GM10248 (cell line): ENCODE measurements at regions of chr10 and their contacts with region 1.

Region 1: DNA sequence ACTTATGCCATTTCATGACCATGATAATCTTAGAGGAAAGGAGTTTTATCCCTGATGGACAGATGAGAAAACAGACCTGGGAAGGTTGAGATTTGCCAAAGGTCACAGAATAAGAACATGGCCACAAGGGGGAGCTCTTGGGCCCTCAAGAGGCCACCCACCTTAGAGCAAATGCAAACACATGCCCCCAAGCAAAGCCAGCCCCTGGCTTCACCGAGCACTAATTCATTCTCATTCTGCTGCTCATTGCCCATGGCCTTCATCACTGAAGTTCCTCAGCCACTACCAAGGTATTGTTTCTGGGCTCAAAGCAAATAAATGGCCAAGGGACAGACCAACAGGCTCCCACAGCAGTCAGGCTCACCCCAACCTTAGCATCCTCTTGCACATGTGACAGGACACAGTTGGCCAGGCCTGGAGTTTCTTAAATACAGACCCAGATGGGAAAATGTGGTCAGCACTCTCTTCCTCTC is 44.2 kb downstream of the PDLIM1 start:
- DNase-seq: peak; percentile 66
- CTCF ChIP-seq: peak; percentile 75

Region 2: GRCh38 chr10:95133016-95133752 is 113.4 kb before region 1 on chr10:
- CTCF ChIA-PET with region 1: interaction called, 11 read pairs
- POLR2A ChIA-PET with region 1: no interaction called
- DNase-seq: peak; percentile 52
- CTCF ChIP-seq: peak; percentile 75

Region 3: DNA sequence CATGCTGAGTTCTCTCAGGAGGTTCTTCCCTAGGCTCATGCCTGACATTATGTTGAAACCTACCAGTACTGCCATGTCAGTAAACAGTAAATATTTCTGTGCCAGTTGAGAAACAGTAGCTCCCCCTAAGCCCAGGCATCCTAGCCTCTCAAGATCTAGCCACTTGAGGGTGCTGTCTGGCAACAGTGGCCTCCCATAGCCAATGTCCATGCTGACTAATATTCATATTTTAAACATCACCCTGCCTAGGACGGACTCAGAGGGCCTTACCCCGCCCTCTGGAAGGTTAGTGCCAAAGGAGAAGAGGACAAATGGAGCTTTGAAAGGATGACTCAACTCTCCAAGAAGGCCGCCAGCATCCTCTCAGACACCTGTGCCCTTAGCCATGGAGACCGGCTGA is 44.9 kb before region 1 on chr10:
- CTCF ChIA-PET with region 1: interaction called, 10 read pairs
- POLR2A ChIA-PET with region 1: no interaction called
- DNase-seq: no peak
- CTCF ChIP-seq: no peak

Region 4: DNA sequence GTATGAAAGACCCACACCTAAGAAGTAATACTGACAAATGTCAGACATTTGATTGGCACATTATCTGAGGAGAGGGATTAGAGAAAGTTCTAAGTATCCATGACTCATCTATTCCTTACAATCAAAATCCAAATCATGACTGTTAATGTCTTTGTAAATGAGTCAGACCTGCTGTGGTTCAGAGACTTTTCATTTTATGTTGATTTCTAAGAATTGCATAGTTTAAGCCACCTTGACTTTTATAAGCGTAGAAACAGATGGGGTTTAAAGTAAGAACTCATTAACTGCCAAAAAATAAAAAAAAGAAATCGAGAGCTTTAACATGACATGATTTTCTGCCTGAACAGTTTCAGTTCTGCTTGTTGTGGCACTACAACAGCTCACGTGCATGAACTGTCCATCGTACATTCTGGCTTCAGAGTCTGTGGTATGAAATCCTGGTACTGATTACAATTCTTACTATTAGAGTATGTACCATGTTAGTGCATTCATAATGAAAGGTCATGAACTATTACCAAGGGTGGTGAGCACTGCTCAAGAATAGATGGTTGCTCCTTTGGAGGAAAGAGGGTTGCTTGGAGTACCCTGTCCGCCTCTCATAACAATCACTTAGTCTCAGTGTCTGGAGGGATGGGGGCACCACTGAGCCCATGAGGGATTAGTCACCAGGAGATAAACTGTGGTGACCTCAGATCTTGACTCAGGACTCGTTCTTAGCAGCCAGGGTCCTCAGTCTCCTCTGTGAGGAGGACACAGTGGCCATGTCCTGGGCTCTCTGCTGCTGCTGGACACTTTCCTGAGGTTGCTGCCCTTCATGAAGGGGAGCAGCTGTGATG is 10.3 kb before region 1 on chr10:
- CTCF ChIA-PET with region 1: interaction called, 61 read pairs
- POLR2A ChIA-PET with region 1: no interaction called
- DNase-seq: peak; percentile 51
- CTCF ChIP-seq: no peak

Region 5: DNA sequence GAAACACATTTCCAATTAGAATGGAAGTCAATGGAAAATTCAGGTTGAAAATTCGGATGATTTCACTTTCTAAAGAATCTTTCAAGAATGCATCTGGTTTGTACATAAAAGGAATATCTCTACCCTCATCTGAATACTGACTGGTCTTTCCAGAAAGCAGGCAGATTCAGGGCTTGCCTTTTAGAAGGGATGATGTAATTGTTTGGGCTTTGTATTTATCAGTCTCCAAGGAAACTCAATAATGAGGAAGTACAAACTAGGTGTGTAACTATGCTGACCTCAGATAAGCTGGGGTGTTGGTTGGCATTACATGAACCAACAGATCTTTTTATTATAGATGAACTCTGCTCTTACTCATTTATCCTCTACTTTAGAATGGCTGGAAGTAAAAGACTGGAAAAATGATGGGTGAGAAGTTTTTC is 20.1 kb after region 1 on chr10:
- CTCF ChIA-PET with region 1: interaction called, 57 read pairs
- POLR2A ChIA-PET with region 1: interaction called, 3 read pairs
- DNase-seq: peak; percentile 78
- CTCF ChIP-seq: no peak

Region 6: DNA sequence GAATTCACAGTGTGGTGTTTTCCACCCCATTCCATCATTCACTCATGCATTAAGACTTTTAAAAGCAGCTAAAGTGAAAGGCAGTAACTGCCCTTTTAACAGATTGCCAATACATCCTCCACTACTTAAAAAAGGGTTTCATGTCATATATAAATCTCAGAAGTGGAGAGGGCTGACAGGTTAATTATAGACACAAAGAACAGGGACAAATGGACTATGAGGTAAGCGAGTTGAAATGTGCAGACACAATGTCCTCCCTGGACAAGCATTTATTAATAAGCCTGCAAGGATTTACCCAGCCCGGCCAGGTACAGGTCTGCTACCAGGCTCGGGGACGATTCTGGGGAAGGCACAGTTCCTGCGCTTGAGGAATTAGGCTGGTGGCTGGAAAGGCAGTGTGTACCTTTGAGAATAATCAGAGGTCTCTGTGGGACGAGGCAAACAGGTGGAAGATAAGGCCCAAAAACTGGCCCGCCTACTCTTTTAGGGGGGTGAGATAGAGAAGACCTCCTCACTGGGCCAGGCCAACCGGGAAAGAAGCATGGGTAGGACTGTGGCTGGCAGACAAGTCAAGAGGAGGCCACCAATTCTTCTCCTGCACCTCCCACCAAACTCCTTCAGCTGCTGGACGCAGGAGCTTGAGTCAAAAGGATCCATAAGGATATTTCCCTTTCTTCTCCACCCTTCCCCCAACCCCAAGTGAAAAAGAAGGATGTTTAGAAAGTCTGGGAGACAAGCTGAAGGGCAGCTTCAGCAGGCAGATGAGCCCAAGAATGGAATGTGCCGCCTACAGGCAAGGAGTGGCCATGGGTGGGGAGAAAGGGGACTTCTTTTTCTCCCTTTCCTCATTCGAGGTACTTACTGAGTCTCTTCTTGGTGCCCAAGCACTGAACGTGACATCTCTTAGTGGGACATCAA is 42.6 kb after region 1 on chr10:
- CTCF ChIA-PET with region 1: interaction called, 45 read pairs
- POLR2A ChIA-PET with region 1: no interaction called
- DNase-seq: peak; percentile 34
- CTCF ChIP-seq: peak; percentile 35

Region 7: DNA sequence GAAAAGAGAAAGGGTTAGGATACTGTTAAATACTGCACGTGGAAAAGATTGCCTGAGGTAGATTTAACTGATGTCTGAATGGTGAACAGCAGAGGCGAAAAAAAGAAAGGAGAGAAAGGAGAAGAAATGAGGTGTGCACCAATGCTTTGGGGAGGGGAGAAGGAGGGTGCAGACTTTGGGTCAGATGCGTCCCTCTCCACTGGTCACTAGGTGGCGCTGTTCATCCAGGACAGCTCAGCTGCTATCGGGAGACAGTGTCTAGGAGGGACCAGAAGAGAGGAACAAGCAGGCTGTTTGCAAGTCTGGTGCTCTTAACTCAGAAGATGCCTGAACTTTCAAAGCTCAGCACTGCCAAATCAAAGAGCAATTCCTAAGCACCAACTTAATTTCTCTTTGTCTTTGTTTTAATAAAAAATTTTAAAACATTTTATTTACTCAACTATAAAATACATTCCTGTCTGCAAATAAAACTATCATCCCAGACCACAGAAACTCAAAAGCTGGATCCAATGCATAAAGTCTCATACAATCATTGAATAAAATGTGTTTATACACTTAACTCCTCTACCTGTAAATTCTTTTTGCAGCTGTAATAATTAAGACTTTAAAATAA is 128.1 kb after region 1 on chr10:
- CTCF ChIA-PET with region 1: interaction called, 16 read pairs
- POLR2A ChIA-PET with region 1: no interaction called
- DNase-seq: peak; percentile 71
- CTCF ChIP-seq: peak; percentile 96

Region 8: DNA sequence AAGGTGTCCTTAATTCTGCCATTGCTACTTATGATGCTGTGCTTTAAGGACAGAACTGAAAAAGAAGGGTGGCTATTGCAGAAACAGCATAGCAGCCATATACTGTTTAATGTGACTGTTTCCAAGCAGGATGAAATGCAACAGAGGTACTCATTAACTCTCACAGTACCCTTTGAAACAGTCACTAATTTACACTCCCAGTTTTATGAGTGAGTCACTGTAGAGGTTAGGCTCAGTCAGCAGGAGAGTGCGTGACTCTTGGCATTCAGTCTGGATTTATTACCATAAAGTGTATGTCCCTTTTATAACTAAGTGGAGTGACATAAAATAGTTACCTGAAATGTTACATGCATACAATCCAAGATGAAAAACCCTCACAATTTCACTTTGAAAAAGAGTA is 382.2 kb after region 1 on chr10:
- CTCF ChIA-PET with region 1: no interaction called
- POLR2A ChIA-PET with region 1: no interaction called
- DNase-seq: no peak
- CTCF ChIP-seq: no peak